CD8-positive, alpha-beta T cell (primary cell): ENCODE measurements at regions of chr10 and their contacts with region 1.

Region 1: DNA sequence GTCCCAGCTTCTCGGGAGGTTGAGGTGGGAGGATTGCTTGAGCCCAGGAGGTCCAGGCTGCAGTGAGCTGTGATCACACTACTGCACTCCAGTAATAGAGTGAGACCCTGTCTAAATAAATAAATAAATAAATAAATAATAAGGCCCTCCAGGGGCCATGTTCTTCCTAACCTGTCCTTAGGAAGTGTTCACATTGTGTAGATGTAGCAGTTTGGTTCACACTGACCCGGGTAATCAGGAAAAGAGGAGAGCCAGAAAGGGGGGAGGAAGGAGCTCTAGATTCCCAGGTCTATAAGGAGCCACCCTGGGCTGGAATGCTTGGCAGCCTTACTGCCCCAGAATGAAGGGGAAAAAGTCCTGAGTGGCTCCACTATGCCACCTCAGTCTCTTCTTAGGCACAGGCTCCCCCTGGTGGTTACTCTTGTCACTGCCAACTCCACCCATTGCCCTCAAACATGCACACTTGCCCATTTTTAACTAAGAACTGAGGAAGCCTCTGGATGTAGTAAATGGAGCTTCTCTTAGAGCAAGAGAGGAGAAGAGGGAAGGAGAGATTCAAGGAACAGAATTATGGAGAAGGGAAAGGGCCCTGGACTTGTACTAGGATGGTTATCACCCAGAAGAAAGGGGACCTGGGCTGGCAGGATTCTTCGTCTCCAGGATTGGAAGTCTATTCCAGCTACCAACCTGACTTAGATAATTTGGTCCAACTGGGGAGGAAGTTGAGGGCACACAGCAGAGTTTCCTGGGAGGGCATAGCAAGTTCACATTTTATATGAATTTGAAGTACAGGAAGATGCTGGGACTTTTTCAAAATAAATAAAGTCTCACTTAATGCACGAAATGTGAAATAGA is 7.8 kb downstream of the HPS6 start:
- DNase-seq: peak; percentile 63 to 86 (median 82)
- ATAC-seq: peak; percentile 97
- H3K4me3 ChIP-seq: no peak overlapping the region
- H3K4me3 Mint-ChIP-seq: no peak overlapping the region
- H3K27ac ChIP-seq: no peak overlapping the region
- H3K27ac Mint-ChIP-seq: no peak overlapping the region
- H3K4me1 ChIP-seq: no peaks in the 10 kb centered on the region
- H3K4me1 Mint-ChIP-seq: peaks cover 5% of the 10 kb centered on the region
- H3K27me3 ChIP-seq: no peaks in the 10 kb centered on the region
- H3K27me3 Mint-ChIP-seq: no peaks in the 10 kb centered on the region
- CTCF ChIP-seq: peak; percentile 82

Region 2: GRCh38 chr10:101840741-101841453 is 232.0 kb before region 1 on chr10:
- CTCF ChIA-PET with region 1: interaction called, 23 read pairs
- POLR2A ChIA-PET with region 1: no interaction called
- intact Hi-C with region 1: loop called (anchors 1 kb)
- DNase-seq: peak; percentile 39 to 82 (median 72)
- ATAC-seq: peak; percentile 44
- H3K4me3 ChIP-seq: peak overlapping the region; percentile 47 to 48
- H3K4me3 Mint-ChIP-seq: peak overlapping the region; percentile 84
- H3K27ac ChIP-seq: no peak overlapping the region
- H3K27ac Mint-ChIP-seq: no peak overlapping the region
- H3K4me1 ChIP-seq: peaks cover 38% of the 10 kb centered on the region
- H3K4me1 Mint-ChIP-seq: peaks cover 48% of the 10 kb centered on the region
- H3K27me3 ChIP-seq: no peaks in the 10 kb centered on the region
- H3K27me3 Mint-ChIP-seq: peaks cover 8% of the 10 kb centered on the region
- CTCF ChIP-seq: peak; percentile 84

Region 3: DNA sequence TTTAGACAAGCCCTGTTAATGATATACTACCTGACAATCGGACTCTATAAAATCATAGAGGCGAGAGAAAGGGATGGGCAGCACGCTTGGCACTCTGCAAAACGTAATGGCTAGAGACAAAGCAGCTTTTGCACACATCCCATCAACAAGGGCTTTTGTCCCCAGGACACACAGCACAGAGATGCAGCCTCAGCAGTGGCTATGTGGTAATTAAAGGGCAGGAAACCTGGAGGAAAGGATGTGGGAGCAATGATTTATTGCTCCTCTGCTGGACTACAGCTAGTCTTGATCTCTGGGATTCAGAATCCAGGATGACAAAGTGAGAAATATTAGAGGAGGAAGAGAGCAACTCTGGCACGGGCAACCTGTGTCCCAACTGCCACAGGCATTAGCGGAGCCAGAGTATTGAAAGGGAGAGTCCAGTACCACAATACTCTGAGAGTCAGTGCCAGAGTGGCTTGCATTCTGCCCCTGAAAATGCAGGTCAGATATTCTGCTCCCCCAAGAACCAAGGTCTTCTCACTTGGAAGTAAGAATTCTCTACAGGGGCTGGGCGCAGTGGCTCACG is 113.5 kb before region 1 on chr10:
- CTCF ChIA-PET with region 1: no interaction called
- POLR2A ChIA-PET with region 1: no interaction called
- intact Hi-C with region 1: no loop called
- DNase-seq: no peak
- ATAC-seq: no peak
- H3K4me3 ChIP-seq: no peak overlapping the region
- H3K4me3 Mint-ChIP-seq: no peak overlapping the region
- H3K27ac ChIP-seq: no peak overlapping the region
- H3K27ac Mint-ChIP-seq: no peak overlapping the region
- H3K4me1 ChIP-seq: no peaks in the 10 kb centered on the region
- H3K4me1 Mint-ChIP-seq: peaks cover 2% of the 10 kb centered on the region
- H3K27me3 ChIP-seq: no peaks in the 10 kb centered on the region
- H3K27me3 Mint-ChIP-seq: no peaks in the 10 kb centered on the region
- CTCF ChIP-seq: no peak

Region 4: DNA sequence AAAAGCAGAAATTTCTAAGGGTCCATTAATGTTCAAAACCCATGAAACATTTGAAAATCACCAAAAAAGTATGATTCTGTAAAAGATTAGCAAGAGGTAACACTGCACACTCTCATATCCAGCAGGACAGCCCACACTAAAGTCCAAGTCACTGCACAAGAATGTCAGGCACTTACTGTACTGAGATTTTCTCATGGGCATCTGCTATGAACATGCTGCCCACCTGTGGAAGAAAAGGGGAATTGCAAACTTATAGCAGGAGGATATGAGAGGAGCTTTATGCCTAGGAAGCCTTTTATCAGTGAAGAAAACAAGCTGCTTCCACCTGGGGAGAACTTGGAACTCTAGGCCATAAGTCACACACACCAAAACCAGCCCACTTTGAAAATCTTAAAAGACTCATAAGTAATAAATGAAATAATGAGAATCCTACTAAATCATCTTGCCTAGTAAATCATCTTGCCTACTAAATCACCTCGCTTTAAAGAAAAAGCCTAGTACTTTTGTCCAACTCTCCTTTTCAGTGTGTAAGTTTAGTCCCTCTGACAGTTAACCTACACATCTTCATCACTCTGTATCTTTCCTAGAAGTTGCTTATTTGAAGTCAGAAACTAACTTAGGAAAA is 63.0 kb before region 1 on chr10:
- CTCF ChIA-PET with region 1: interaction called, 39 read pairs
- POLR2A ChIA-PET with region 1: interaction called, 3 read pairs
- intact Hi-C with region 1: loop called (anchors 1 kb)
- DNase-seq: peak in 7 of 9 experiments; percentile 19 to 72 (median 35)
- ATAC-seq: peak; percentile 94
- H3K4me3 ChIP-seq: no peak overlapping the region
- H3K4me3 Mint-ChIP-seq: no peak overlapping the region
- H3K27ac ChIP-seq: no peak overlapping the region
- H3K27ac Mint-ChIP-seq: no peak overlapping the region
- H3K4me1 ChIP-seq: no peaks in the 10 kb centered on the region
- H3K4me1 Mint-ChIP-seq: peaks cover 2% of the 10 kb centered on the region
- H3K27me3 ChIP-seq: no peaks in the 10 kb centered on the region
- H3K27me3 Mint-ChIP-seq: no peaks in the 10 kb centered on the region
- CTCF ChIP-seq: peak; percentile 82

Region 5: DNA sequence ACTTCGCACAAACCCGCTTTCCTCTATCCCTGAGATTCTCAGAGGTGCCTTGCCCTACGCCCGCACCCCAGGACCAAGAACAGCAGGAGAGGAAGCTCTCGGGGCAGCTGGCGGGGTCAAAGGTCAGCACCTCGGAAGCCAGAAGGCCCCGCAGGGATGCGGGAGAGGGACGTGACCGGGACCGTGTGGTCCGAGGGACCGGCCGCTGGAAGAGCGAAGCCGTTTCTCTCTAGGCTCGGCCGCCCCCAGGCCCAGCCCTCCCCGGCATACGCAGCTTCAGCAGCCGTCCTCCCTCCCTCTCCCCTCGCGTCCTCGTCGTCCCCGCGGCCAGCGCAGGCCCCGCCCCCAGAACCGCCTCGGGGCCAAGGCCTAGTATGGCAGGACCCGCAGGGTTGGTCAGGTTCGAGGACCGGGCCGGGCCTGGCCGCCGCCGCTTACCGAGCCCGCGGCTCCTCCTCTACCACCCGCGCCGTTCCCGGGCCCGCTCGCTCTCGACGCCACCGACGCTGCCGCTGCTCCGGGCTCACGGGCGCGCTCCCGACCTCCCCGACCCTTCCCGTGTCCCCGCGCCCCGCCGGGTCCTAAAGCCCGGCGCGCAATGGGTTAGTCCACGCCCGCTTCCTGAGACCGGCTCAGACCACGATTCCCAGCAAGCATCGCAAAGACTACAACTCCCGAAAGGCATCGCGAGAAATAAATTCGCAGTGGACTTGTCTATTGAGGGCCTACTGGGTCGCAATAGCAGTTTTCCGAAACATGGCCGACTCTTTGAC is 17.1 kb before region 1 on chr10 and contains the start of gene ARMH3:
- CTCF ChIA-PET with region 1: interaction called, 18 read pairs
- POLR2A ChIA-PET with region 1: interaction called, 3 read pairs
- intact Hi-C with region 1: no loop called
- DNase-seq: peak; percentile 75 to 95 (median 87)
- ATAC-seq: peak; percentile 93
- H3K4me3 ChIP-seq: peak within 1 kb of the TSS; percentile 93 to 94
- H3K4me3 Mint-ChIP-seq: peak within 1 kb of the TSS; percentile 97
- H3K27ac ChIP-seq: peak within 1 kb of the TSS; percentile 79 to 90
- H3K27ac Mint-ChIP-seq: peak within 1 kb of the TSS; percentile 95
- H3K4me1 ChIP-seq: peaks cover 40% of the 10 kb centered on the region
- H3K4me1 Mint-ChIP-seq: peaks cover 42% of the 10 kb centered on the region
- H3K27me3 ChIP-seq: no peaks in the 10 kb centered on the region
- H3K27me3 Mint-ChIP-seq: no peaks in the 10 kb centered on the region
- CTCF ChIP-seq: no peak
- total RNA-seq, gene ARMH3: 18.6 to 20.6 TPM

Region 6: DNA sequence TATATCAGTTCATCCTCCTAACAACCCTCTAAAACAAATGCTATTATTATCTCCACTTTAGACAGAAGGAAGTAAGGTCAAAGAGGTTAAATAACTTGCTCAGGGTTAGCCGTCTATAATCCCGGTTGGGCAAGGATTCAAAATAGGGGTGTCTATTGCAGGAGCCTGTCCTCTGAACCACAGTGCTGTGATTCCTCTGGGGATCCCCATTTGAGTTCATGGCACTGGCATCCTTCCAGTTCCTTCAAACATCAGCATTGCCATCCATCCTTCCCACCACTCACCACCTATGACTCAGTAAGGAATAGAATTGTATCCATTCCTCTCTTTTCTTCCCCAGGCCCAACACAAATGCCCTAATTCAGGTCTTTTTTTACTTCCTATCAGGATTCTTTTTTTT is 17.9 kb after region 1 on chr10:
- CTCF ChIA-PET with region 1: interaction called, 13 read pairs
- POLR2A ChIA-PET with region 1: no interaction called
- intact Hi-C with region 1: no loop called
- DNase-seq: no peak
- ATAC-seq: no peak
- H3K4me3 ChIP-seq: no peak overlapping the region
- H3K4me3 Mint-ChIP-seq: no peak overlapping the region
- H3K27ac ChIP-seq: no peak overlapping the region
- H3K27ac Mint-ChIP-seq: no peak overlapping the region
- H3K4me1 ChIP-seq: no peaks in the 10 kb centered on the region
- H3K4me1 Mint-ChIP-seq: no peaks in the 10 kb centered on the region
- H3K27me3 ChIP-seq: no peaks in the 10 kb centered on the region
- H3K27me3 Mint-ChIP-seq: no peaks in the 10 kb centered on the region
- CTCF ChIP-seq: no peak

Region 7: DNA sequence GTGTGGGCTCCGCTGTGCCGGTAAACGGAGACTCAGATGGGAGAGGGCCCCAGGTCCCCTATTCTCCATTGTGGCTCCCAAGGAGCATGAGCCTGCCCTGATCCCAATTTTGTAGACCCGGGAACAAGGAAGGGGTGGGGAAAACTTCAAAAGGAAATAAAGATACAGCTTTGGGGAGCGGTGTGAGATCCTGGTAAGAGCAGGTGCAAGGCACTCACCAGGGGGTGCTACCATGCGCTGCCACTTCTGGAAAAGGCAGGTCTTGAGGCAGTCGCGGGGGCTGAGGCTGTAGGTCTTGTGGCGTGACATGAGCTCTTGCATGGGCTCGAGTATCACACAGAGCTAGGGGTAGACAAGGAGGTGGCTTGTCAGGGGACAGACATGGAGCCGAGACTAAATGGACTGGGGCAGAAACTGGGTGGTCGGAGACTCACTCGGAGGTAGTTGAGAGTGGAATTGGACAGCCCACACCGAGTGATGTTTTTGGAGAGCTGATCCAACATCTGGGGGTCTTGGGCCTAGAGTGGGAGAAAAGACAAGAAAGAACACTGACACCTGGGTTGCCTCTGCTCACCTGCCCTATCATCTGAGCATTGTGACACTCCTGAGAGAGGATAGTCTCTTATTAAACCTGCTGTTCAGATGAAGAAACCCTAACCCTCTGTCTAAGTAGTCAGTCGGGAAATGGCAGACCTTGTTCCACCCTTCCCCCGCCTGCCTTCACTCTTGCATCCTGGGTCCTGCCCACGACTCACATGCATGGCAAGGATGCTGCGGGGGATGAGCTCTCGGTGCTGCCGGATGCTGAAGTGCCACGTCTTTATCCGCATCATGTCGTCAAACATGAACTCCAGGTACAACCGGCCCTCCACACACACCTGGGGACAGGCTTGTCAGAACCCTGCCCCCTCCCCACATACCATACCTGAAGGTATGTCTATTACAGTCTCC is 36.5 kb after region 1 on chr10:
- CTCF ChIA-PET with region 1: interaction called, 25 read pairs
- POLR2A ChIA-PET with region 1: no interaction called
- intact Hi-C with region 1: no loop called
- DNase-seq: no peak
- ATAC-seq: no peak
- H3K4me3 ChIP-seq: no peak overlapping the region
- H3K4me3 Mint-ChIP-seq: no peak overlapping the region
- H3K27ac ChIP-seq: no peak overlapping the region
- H3K27ac Mint-ChIP-seq: no peak overlapping the region
- H3K4me1 ChIP-seq: peaks cover 32% of the 10 kb centered on the region
- H3K4me1 Mint-ChIP-seq: peaks cover 42% of the 10 kb centered on the region
- H3K27me3 ChIP-seq: no peaks in the 10 kb centered on the region
- H3K27me3 Mint-ChIP-seq: no peaks in the 10 kb centered on the region
- CTCF ChIP-seq: no peak